ENCODE measurements at regions of chr2 and their contacts with region 1.

Region 1: GRCh38 chr2:181058378-181059269 is 78.2 kb downstream of the UBE2E3 start:
- DNase-seq: peak; percentile 53
- H3K4me3 ChIP-seq: no peak overlapping the region
- H3K27ac ChIP-seq: no peak overlapping the region
- H3K4me1 ChIP-seq: no peaks in the 10 kb centered on the region
- H3K27me3 ChIP-seq: no peaks in the 10 kb centered on the region
- CTCF ChIP-seq: peak; percentile 35 to 43
- POLR2A ChIP-seq: no peak

Region 2: GRCh38 chr2:180240774-180241173 is 817.9 kb before region 1 on chr2:
- CTCF ChIA-PET with region 1: interaction called, 3 read pairs
- POLR2A ChIA-PET with region 1: no interaction called
- dilution Hi-C with region 1: no loop called
- intact Hi-C with region 1: loop called (anchors 2 kb)
- DNase-seq: no peak
- H3K4me3 ChIP-seq: no peak overlapping the region
- H3K27ac ChIP-seq: no peak overlapping the region
- H3K4me1 ChIP-seq: no peaks in the 10 kb centered on the region
- H3K27me3 ChIP-seq: no peaks in the 10 kb centered on the region
- CTCF ChIP-seq: peak in 1 of 2 donors; percentile 5
- POLR2A ChIP-seq: no peak

Region 3: GRCh38 chr2:180970016-180970415 is 88.6 kb before region 1 on chr2:
- CTCF ChIA-PET with region 1: no interaction called
- POLR2A ChIA-PET with region 1: no interaction called
- dilution Hi-C with region 1: no loop called
- intact Hi-C with region 1: no loop called
- DNase-seq: no peak
- H3K4me3 ChIP-seq: no peak overlapping the region
- H3K27ac ChIP-seq: no peak overlapping the region
- H3K4me1 ChIP-seq: no peaks in the 10 kb centered on the region
- H3K27me3 ChIP-seq: no peaks in the 10 kb centered on the region
- CTCF ChIP-seq: no peak
- POLR2A ChIP-seq: no peak

Region 4: DNA sequence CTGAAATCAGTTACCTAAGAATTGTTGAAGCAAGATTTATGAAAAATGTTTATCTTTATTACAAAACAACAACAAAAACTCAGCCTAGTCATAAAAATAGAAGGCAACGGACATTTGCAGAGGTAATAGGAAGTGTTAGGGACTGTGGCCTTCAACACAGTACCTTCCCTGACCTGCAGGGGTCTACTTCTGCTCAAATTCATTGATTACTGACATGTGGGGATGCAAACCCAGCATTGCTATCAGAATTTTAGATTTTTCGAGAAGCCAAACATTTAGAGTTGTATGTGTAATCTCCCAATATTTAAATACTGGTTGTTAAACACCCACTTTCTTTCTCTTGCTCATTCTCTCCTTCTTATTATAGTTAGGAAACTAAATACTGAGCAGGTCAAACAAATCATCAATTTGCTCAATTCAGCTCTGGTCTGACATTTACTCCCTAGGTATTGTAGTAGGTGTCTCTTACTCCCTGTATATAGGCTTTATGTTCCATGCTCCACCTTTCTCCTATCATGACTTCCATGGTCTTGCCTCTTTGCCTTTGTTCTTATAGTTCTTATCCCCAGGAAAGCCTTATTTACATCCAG is 120.3 kb after region 1 on chr2:
- CTCF ChIA-PET with region 1: no interaction called
- POLR2A ChIA-PET with region 1: no interaction called
- dilution Hi-C with region 1: no loop called
- intact Hi-C with region 1: no loop called
- DNase-seq: no peak
- H3K4me3 ChIP-seq: no peak overlapping the region
- H3K27ac ChIP-seq: no peak overlapping the region
- H3K4me1 ChIP-seq: no peaks in the 10 kb centered on the region
- H3K27me3 ChIP-seq: no peaks in the 10 kb centered on the region
- CTCF ChIP-seq: peak; percentile 12 to 36
- POLR2A ChIP-seq: no peak

Measured in endothelial cell of umbilical vein (primary cell).